CD4-positive, alpha-beta T cell (primary cell): ENCODE measurements at regions of chr22 and their contacts with region 1.

Region 1: DNA sequence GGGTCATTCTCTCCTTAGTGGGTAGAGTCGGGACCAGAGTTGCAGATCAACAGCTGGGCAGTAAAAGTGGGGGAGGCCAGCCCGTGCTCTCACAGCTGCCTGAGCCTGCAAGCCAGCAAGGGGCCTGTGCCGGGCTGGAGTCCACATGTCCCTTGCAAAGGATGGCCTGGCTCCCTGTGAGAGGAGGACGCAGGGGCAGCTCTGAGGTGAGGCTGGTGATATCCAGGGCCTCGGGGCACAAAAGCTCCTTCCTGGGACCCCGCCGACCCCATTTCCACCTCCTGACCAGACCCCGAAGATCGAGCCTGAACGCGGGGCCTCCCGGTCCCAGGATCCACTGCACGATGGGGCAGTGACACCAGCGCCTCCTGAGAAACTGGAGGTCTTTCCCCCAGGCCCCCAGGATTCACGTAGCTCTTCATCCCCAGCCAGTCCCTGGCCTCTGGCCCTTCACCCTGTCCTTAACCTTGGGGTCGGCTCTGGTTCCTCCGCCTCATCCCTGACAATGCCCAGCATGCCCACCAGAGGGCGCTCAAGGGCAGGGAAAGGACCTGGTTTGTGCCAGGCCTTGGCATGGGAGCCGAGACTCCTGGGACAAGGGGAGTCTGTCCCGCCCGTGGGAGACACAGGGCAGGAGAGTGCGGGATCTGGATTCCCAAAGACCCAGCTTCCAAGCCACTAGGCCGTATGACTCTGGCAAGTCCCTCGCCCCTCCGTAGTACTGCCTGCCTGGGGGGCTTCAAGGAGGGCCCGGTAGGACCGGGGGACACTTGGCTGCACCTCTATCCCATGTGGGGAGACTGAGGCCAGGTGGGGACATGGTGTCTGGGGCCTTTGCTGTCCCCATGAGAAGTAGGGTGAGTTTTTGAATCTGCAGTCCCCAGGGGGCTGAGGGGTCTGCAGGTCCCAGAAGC is 17.8 kb upstream of the WNT7B start:
- DNase-seq: peak; percentile 58 to 89 (median 76)
- ATAC-seq: peak; percentile 83
- H3K4me3 ChIP-seq: no peak overlapping the region
- H3K4me3 Mint-ChIP-seq: no peak overlapping the region
- H3K27ac ChIP-seq: no peak overlapping the region
- H3K27ac Mint-ChIP-seq: no peak overlapping the region
- H3K4me1 ChIP-seq: peaks cover 21% of the 10 kb centered on the region
- H3K4me1 Mint-ChIP-seq: peaks cover 4% of the 10 kb centered on the region
- H3K27me3 ChIP-seq: peaks cover 0 to 3% of the 10 kb centered on the region in 2 experiments
- H3K27me3 Mint-ChIP-seq: peaks cover 9% of the 10 kb centered on the region
- CTCF ChIP-seq: peak; percentile 98

Region 2: GRCh38 chr22:45612451-45612901 is 382.3 kb before region 1 on chr22:
- CTCF ChIA-PET with region 1: no interaction called
- POLR2A ChIA-PET with region 1: no interaction called
- intact Hi-C with region 1: no loop called
- DNase-seq: peak in 5 of 14 experiments; percentile 15 to 54 (median 48)
- ATAC-seq: peak; percentile 24
- H3K4me3 ChIP-seq: no peak overlapping the region
- H3K4me3 Mint-ChIP-seq: no peak overlapping the region
- H3K27ac ChIP-seq: peak overlapping the region in 1 of 2 donors; percentile 35
- H3K27ac Mint-ChIP-seq: no peak overlapping the region
- H3K4me1 ChIP-seq: peaks cover 22% of the 10 kb centered on the region
- H3K4me1 Mint-ChIP-seq: peaks cover 5% of the 10 kb centered on the region
- H3K27me3 ChIP-seq: no peaks in the 10 kb centered on the region
- H3K27me3 Mint-ChIP-seq: no peaks in the 10 kb centered on the region
- CTCF ChIP-seq: no peak

Region 3: DNA sequence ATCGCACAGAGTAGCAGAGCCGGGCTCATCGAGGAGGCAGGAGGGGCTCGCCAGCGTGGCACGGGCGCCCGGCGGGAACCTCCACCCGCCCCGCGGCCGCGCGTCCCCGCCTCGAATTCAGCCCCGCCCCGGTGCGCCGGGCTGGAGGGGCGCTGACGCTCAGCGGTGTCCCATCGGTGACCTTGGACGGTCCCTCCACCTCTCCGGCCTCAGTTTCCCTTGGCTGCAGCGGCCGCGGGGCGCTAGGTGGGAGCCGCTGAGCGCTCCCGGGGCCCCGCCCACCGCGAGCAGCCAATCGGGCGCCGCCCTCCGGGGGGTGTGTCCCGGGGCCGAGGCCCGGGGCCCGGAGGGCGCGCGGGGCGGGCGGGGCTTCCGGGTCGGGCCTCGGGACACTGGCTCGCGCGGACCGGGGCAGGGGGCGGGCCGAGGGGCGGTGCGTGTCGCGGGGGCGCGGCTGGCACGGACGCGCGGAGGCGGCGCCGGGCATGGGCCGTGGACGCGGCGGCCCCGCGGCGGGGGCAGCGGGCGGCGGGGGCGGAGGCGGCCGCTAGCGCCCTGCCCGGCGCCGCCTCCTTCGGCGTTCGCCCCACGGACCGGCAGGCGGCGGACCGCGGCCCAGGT is 155.4 kb after region 1 on chr22 and contains the start of gene PPARA:
- CTCF ChIA-PET with region 1: no interaction called
- POLR2A ChIA-PET with region 1: no interaction called
- intact Hi-C with region 1: no loop called
- DNase-seq: peak; percentile 63 to 96 (median 88)
- ATAC-seq: peak; percentile 75
- H3K4me3 ChIP-seq: peak within 1 kb of the TSS; percentile 87
- H3K4me3 Mint-ChIP-seq: peak within 1 kb of the TSS; percentile 89
- H3K27ac ChIP-seq: peak within 1 kb of the TSS; percentile 21 to 58
- H3K27ac Mint-ChIP-seq: peak within 1 kb of the TSS; percentile 74
- H3K4me1 ChIP-seq: peaks cover 32% of the 10 kb centered on the region
- H3K4me1 Mint-ChIP-seq: peaks cover 14% of the 10 kb centered on the region
- H3K27me3 ChIP-seq: no peaks in the 10 kb centered on the region
- H3K27me3 Mint-ChIP-seq: no peaks in the 10 kb centered on the region
- CTCF ChIP-seq: no peak
- total RNA-seq, gene PPARA: 9.1 to 9.3 TPM

Region 4: GRCh38 chr22:46309526-46310085 is 314.9 kb after region 1 on chr22:
- CTCF ChIA-PET with region 1: no interaction called
- POLR2A ChIA-PET with region 1: no interaction called
- intact Hi-C with region 1: loop called in 1 of 2 experiments (anchors 5 kb)
- DNase-seq: no peak
- ATAC-seq: no peak
- H3K4me3 ChIP-seq: no peak overlapping the region
- H3K4me3 Mint-ChIP-seq: no peak overlapping the region
- H3K27ac ChIP-seq: no peak overlapping the region
- H3K27ac Mint-ChIP-seq: no peak overlapping the region
- H3K4me1 ChIP-seq: no peaks in the 10 kb centered on the region
- H3K4me1 Mint-ChIP-seq: no peaks in the 10 kb centered on the region
- H3K27me3 ChIP-seq: no peaks in the 10 kb centered on the region
- H3K27me3 Mint-ChIP-seq: no peaks in the 10 kb centered on the region
- CTCF ChIP-seq: no peak